ENCODE measurements at regions of chr10 and their contacts with region 1.

Region 1: DNA sequence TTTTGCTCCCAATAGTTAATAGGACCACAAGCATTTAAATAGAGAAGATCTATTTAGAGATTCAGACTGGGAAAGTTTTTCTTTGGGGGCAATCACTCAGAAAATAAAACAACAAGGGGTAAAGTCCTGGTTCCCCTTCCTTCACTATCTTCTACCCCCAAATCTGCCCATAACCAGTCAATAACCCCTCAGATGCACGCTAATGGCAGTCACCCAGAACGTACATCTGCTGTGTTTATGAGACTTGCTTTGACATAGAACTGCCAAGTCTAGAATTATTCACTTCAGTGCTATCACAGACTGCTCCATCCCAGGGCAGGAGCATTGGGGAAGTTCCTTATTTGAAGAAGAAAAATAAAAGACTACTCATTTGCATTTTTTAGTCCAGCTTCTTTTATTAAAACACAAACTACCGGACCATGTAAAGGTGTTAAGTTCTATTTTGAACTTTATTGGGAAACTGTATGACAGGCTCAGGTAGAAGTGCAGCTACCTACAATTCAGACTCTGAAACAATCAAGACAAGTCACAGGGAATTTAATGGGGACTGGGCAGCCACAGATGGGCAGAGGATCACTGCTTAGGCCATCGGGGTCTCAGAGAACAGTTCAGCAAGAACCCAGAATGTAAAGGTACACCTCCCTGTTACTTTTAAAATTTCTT is 38.4 kb downstream of the ANK3 start:
- DNase-seq: peak in 2 of 10 donors; percentile 50 to 63
- H3K4me3 ChIP-seq: peak overlapping the region in 8 of 59 donors; percentile 4 to 30 (median 16)
- H3K27ac ChIP-seq: peak overlapping the region in 58 of 59 donors; percentile 76 to 99 (median 94)
- H3K27me3 ChIP-seq: no peaks in the 10 kb centered on the region
- CTCF ChIP-seq: no peak

Region 2: DNA sequence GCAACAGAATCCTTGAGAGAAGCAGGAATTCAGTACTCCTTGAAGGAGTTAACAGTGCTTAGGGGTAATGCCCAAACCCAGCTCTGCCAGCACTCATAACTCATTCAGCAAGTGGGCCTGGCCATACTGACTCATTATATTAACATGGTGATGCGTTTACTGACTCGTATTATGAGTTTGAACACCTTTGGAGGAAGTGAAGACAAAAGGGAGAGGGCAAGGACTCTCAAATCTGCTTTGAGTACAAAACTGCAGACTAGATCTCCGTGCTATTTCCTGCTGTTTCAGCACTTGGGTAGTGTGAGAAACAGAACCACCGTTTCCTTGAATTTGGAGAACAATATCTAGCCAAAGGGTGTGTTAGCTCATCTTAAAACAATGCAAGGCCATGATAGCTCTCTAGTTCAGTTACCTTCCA is 672.4 kb before region 1 on chr10:
- intact Hi-C with region 1: no loop called
- DNase-seq: no peak
- H3K4me3 ChIP-seq: no peak overlapping the region
- H3K27ac ChIP-seq: no peak overlapping the region
- H3K27me3 ChIP-seq: no peaks in the 10 kb centered on the region
- CTCF ChIP-seq: no peak

Region 3: GRCh38 chr10:60282771-60283353 is 68.5 kb before region 1 on chr10:
- intact Hi-C with region 1: no loop called
- DNase-seq: no peak
- H3K4me3 ChIP-seq: no peak overlapping the region
- H3K27ac ChIP-seq: peak overlapping the region in 23 of 59 donors; percentile 0 to 57 (median 24)
- H3K27me3 ChIP-seq: no peaks in the 10 kb centered on the region
- CTCF ChIP-seq: no peak

Region 4: DNA sequence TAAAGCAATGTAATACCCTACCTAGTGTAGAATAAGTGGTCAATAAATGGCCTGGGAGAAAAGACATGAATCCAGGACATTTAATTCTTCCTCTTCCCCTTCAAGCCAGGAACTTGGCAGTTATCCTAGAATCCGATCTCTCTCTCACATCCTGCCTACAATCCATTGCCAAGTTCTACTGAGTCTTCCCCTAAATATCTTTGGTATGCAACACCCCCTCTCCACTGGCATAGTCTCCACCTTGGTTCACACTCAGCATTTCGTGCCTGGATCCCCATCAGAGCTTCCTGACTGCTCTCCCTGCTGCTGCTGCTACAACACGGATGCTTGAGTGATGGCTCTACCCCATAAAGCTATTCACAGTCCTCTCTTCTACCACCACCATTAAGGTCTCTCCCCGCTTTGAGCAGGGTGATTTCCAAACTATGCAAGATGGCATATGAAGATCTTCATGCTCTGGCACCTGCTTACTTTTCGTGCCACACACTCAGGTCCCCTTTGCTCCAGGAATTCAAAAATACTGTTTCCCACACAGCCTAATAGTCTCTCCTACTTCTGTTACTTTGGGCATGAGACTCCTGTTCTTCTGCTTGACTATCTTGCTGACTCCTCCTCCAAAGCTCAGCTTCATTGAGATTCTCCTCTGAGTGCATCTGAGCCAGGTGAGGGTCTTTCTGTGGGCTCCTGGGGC is 33.5 kb after region 1 on chr10:
- intact Hi-C with region 1: loop called (anchors 5 kb)
- DNase-seq: peak in 5 of 10 donors; percentile 45 to 72 (median 61)
- H3K4me3 ChIP-seq: peak overlapping the region in 42 of 59 donors; percentile 1 to 83 (median 32)
- H3K27ac ChIP-seq: peak overlapping the region in 54 of 59 donors; percentile 5 to 97 (median 72)
- H3K27me3 ChIP-seq: no peaks in the 10 kb centered on the region
- CTCF ChIP-seq: no peak

Region 5: GRCh38 chr10:60394446-60394845 is 43.1 kb after region 1 on chr10:
- intact Hi-C with region 1: loop called (anchors 5 kb)
- DNase-seq: peak in 6 of 10 donors; percentile 38 to 62 (median 54)
- H3K4me3 ChIP-seq: no peak overlapping the region
- H3K27ac ChIP-seq: peak overlapping the region in 58 of 59 donors; percentile 4 to 95 (median 66)
- H3K27me3 ChIP-seq: no peaks in the 10 kb centered on the region
- CTCF ChIP-seq: no peak

Measured in dorsolateral prefrontal cortex (tissue), 120 donors.